ENCODE measurements at regions of chr17 and their contacts with region 1.

Region 1: DNA sequence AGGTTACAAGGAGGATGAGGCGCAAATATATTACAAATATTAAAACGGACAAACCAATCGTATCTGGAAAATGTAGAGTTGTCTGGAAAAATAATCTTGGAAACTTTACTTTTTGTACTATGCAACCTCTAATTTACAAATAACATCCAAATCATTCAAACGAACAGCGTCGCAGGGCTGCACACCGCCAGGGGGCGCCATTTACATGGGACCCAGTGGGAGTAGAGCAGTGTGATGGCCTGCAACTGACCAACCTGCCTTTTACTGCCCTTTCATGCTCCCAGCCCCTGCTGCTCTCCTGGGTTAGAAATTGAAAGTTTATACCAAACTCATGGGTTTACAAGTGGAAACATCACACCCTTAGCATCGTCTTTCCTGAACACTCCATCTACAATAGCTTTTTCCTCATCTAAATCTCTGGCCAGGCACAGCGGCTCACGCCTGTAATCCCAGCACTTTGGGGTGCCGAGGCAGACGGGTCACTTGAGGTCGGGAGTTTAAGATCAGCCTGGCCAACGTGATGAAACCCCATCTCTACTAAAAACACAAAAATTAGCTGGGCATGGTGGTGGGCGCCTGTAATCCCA is 10.0 kb downstream of the PITPNC1 start:
- DNase-seq: peak in 1 of 5 donors; percentile 75
- ATAC-seq: no peak
- H3K4me3 ChIP-seq: no peak overlapping the region
- H3K27ac ChIP-seq: peak overlapping the region in 1 of 12 donors; percentile 18
- H3K4me1 ChIP-seq: peaks cover 0 to 43% (median 13%) of the 10 kb centered on the region in 12 donors
- H3K27me3 ChIP-seq: no peaks in the 10 kb centered on the region
- CTCF ChIP-seq: peak; percentile 42 to 85 (median 58)
- POLR2A ChIP-seq: no peak

Region 2: DNA sequence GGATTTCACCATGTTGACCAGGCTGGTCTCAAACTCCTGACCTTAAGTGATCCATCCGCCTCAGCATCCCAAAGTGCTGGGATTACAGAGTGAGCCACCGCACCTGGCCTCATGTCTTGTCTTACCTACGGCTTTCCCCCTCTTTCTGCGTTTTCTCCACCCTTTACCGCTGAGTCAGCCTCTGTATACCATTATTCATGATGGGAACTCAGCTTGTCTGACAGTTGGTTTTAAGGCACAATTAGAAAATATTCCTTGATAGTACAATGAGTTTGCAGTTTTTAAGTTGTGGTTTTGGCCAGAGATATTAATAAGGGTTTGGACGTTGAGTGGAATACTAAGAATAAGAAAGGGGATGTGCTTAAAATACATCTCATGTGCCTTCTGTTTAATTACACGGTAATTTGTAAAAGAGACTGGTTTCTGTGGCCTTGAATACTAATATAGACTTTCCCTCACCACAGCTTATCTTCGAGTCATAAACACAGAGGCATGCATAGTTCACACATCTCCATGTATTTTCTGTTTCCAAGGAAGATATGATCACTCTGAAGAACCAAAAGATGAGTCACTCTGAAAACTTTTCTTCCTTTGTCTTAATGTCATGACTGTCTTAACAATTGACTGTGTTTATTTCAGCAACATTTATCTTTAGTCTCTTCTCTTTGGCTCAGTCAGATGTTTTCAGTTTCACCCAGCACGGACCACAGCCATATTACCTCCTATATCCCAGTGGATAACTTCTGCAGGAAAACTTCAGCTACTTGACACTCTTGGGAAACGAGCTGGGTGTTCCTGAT is 44.4 kb after region 1 on chr17:
- intact Hi-C with region 1: loop called in 3 of 10 experiments (anchors 10 kb)
- DNase-seq: no peak
- ATAC-seq: peak in 1 of 4 donors; percentile 8
- H3K4me3 ChIP-seq: no peak overlapping the region
- H3K27ac ChIP-seq: peak overlapping the region in 7 of 12 donors; percentile 10 to 58 (median 39)
- H3K4me1 ChIP-seq: peaks cover 0 to 57% (median 20%) of the 10 kb centered on the region in 12 donors
- H3K27me3 ChIP-seq: no peaks in the 10 kb centered on the region
- CTCF ChIP-seq: no peak
- POLR2A ChIP-seq: no peak